MCF 10A (cell line): ENCODE measurements at regions of chr10 and their contacts with region 1.

Region 1: GRCh38 chr10:18703521-18703920 is 44.3 kb downstream of the ARL5B start:
- DNase-seq: no peak
- H3K4me3 Mint-ChIP-seq: no peak overlapping the region
- H3K27ac Mint-ChIP-seq: no peak overlapping the region
- H3K4me1 Mint-ChIP-seq: no peaks in the 10 kb centered on the region
- H3K27me3 Mint-ChIP-seq: no peaks in the 10 kb centered on the region
- CTCF ChIP-seq: no peak

Region 2: GRCh38 chr10:18689498-18689897 is 14.0 kb before region 1 on chr10:
- CTCF ChIA-PET with region 1: interaction called, 14 read pairs
- POLR2A ChIA-PET with region 1: no interaction called
- intact Hi-C with region 1: no loop called
- DNase-seq: peak; percentile 50
- H3K4me3 Mint-ChIP-seq: no peak overlapping the region
- H3K27ac Mint-ChIP-seq: no peak overlapping the region
- H3K4me1 Mint-ChIP-seq: no peaks in the 10 kb centered on the region
- H3K27me3 Mint-ChIP-seq: no peaks in the 10 kb centered on the region
- CTCF ChIP-seq: peak; percentile 43